GM12878 (cell line): ENCODE measurements at regions of chr6 and their contacts with region 1.

Region 1: DNA sequence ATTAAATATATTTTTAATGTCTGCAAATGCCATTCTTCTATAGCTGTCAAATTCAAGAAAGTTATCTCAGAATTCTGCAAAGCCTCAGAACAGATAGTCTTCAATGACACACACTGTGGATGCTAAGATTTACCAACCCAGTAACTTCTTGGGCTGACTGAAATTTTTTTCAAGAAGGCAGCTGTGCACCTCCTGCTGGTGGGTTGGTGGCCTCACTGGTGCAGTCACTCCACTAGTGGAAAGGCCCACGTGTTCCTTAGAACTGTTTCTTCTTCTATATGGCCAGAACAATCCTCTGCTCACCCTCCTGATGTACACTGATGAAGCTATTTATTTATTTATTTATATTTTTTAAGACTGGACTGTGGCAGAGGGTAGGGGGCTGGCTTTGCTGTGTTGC is 28.1 kb upstream of the MTCL3 start:
- DNase-seq: no peak
- ATAC-seq: peak; percentile 74
- H3K4me3 ChIP-seq: no peak overlapping the region
- H3K27ac ChIP-seq: no peak overlapping the region
- H3K4me1 ChIP-seq: no peaks in the 10 kb centered on the region
- H3K27me3 ChIP-seq: no peaks in the 10 kb centered on the region
- CTCF ChIP-seq: peak; percentile 25 to 41 (median 27); a peak in 3 of 6 replicates
- EP300 ChIP-seq: no peak
- POLR2A ChIP-seq: no peak
- RAD21 ChIP-seq: no peak

Region 2: GRCh38 chr6:126091507-126091906 is 1455.7 kb before region 1 on chr6:
- CTCF ChIA-PET with region 1: no interaction called
- POLR2A ChIA-PET with region 1: no interaction called
- RAD21 ChIA-PET with region 1: no interaction called
- SMC1A ChIA-PET with region 1: no interaction called
- in situ Hi-C with region 1: no loop called
- intact Hi-C with region 1: no loop called
- DNase-seq: no peak
- ATAC-seq: no peak
- H3K4me3 ChIP-seq: no peak overlapping the region
- H3K27ac ChIP-seq: no peak overlapping the region
- H3K4me1 ChIP-seq: no peaks in the 10 kb centered on the region
- H3K27me3 ChIP-seq: no peaks in the 10 kb centered on the region
- CTCF ChIP-seq: no peak
- EP300 ChIP-seq: no peak
- POLR2A ChIP-seq: no peak
- RAD21 ChIP-seq: no peak

Region 3: DNA sequence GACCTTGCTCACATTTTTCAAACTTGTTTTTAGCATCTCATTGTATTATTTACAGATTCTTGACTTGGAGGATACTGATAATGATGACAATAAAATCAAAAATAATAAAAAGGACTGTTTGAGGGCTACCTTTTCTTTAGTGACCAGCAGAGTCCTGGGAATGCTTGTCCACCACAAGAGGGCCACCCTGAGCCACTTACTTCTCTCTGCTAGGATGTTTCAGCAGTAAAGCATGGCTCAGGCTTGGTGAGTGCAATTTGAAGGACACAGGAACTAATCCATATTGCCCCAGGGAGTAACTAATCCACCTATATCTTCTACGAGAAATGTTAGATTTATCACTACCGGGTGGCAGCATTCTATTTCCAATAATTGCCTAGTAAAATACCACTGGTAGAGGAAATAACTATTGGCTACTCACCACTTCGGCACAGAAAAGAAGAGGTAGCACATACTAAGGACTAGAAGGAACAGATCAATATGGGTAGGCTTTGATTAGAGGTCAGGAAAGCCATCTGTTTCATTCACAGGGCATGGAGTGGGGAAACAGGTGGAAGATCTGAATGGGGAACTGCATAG is 82.2 kb before region 1 on chr6:
- CTCF ChIA-PET with region 1: interaction called, 11 read pairs
- POLR2A ChIA-PET with region 1: no interaction called
- RAD21 ChIA-PET with region 1: interaction called, 6 read pairs
- SMC1A ChIA-PET with region 1: interaction called, 3 read pairs
- in situ Hi-C with region 1: no loop called
- intact Hi-C with region 1: no loop called
- DNase-seq: no peak
- ATAC-seq: peak; percentile 98
- H3K4me3 ChIP-seq: no peak overlapping the region
- H3K27ac ChIP-seq: no peak overlapping the region
- H3K4me1 ChIP-seq: no peaks in the 10 kb centered on the region
- H3K27me3 ChIP-seq: no peaks in the 10 kb centered on the region
- CTCF ChIP-seq: peak; percentile 81 to 88 (median 83)
- EP300 ChIP-seq: no peak
- POLR2A ChIP-seq: no peak
- RAD21 ChIP-seq: peak; percentile 88

Region 4: DNA sequence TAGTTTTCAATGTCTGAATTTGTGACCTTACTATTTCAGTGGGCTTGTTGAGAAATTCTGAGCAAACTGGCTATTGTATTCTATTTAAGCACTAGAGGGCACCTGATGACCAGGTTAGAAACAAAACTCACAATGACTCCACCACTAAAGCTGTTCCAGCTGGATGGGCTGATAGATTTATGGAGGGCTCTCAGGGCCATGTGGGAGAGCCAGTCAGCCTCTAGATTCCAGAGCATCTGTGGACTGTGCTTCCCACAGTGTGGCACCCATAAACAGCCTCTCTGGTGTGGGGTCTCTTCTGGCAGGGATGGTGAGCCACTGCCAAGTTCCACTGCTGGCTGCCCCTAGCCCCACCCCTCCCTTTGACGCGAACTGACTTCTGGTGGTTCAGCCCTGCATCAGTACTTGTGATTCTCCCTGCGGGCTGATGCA is 58.9 kb after region 1 on chr6:
- CTCF ChIA-PET with region 1: no interaction called
- POLR2A ChIA-PET with region 1: no interaction called
- RAD21 ChIA-PET with region 1: no interaction called
- SMC1A ChIA-PET with region 1: no interaction called
- in situ Hi-C with region 1: no loop called
- intact Hi-C with region 1: no loop called
- DNase-seq: no peak
- ATAC-seq: peak; percentile 46; the same call in 2 of the 3 replicates
- H3K4me3 ChIP-seq: no peak overlapping the region
- H3K27ac ChIP-seq: no peak overlapping the region
- H3K4me1 ChIP-seq: no peaks in the 10 kb centered on the region
- H3K27me3 ChIP-seq: no peaks in the 10 kb centered on the region
- CTCF ChIP-seq: peak in 2 of 3 experiments; percentile 10 to 21; a peak in 3 of 6 replicates
- EP300 ChIP-seq: no peak
- POLR2A ChIP-seq: no peak
- RAD21 ChIP-seq: peak; percentile 25; the same call in 1 of the 2 replicates